Left ventricle myocardium inferior (tissue), 1 donor: ENCODE measurements at regions of chr7 and their contacts with region 1.

Region 1: DNA sequence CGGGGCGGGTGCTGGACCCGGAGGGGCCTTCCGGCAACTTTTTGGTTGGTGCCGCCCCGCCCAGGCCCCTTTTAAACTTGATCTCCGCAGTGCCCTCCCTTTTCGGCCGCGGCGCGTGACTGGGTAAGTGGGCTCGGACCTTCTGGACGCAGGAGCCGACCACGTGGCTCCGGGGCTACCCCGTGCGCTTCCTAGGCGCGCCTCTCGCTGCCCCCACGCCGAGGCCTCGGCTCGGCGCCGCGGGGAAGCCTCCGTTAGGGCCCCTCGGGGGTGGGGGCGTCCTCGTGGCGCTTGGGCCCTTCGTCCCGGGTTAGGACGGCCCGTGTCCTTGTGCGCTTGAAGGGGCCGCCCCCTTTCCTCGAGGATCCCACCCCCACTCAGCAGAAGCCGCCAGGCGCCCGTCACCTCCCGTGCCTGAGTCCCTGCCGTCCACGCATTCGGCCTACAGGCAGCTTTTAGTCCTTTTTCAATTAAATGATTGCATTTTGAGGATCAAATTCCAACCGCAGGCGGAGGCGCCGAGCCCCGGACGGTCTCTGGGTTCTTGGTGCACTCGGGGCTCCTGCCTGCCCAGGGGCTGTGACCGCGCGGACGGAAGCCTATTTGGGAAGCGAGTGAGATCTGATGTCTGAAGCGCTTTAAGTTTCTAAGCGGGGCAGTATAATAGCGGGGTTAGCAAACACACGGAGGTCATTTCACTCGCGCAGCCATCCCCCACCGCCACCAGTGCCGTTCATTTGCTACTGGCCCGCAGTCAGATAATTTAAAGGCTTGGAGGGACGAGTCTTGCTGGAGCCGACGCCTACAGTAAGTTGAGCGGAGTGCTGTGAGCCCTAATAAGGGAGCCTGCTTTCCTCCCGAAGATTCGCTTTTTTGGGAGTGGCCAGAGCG is 31.8 kb upstream of the TOMM7 start:
- DNase-seq: peak; percentile 92
- H3K4me3 ChIP-seq: peak overlapping the region; percentile 95
- H3K27ac ChIP-seq: peak overlapping the region; percentile 97
- H3K4me1 ChIP-seq: peaks cover 52% of the 10 kb centered on the region
- H3K27me3 ChIP-seq: no peaks in the 10 kb centered on the region
- CTCF ChIP-seq: peak; percentile 95

Region 2: DNA sequence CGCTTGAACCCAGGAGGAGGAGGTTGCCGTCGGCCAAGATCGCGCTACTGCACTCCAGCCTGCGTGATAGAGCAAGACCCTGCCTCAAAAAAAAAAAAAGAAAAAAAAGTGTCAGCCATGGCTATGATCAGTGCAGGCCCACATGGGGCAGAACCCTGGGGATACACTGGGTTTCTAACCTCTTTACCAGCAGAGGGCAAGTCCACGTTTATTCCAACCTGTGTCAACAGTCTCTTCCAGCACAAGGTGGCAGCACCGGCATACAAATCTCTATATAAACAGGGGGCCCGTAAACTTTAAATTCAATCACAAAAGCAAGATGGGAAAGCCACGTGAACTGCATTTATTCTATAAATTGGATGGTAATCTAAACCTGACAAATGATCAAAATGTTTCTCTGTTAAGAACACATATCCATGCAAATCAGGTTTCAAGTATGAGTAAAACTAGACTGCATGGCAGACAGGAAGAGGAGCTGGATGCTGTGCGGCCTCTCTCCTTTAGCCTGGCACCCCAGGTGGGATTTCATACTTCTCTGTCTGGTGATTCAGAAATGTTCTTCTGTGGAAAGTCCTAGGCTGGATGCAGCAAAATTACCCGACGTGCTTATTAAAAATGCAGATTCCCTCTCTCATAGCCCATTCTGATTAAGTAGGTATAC is 294.4 kb before region 1 on chr7:
- intact Hi-C with region 1: loop called (anchors 5 kb)
- DNase-seq: peak; percentile 60
- H3K4me3 ChIP-seq: no peak overlapping the region
- H3K27ac ChIP-seq: peak overlapping the region; percentile 82
- H3K4me1 ChIP-seq: peaks cover 48% of the 10 kb centered on the region
- H3K27me3 ChIP-seq: no peaks in the 10 kb centered on the region
- CTCF ChIP-seq: peak; percentile 95

Region 3: DNA sequence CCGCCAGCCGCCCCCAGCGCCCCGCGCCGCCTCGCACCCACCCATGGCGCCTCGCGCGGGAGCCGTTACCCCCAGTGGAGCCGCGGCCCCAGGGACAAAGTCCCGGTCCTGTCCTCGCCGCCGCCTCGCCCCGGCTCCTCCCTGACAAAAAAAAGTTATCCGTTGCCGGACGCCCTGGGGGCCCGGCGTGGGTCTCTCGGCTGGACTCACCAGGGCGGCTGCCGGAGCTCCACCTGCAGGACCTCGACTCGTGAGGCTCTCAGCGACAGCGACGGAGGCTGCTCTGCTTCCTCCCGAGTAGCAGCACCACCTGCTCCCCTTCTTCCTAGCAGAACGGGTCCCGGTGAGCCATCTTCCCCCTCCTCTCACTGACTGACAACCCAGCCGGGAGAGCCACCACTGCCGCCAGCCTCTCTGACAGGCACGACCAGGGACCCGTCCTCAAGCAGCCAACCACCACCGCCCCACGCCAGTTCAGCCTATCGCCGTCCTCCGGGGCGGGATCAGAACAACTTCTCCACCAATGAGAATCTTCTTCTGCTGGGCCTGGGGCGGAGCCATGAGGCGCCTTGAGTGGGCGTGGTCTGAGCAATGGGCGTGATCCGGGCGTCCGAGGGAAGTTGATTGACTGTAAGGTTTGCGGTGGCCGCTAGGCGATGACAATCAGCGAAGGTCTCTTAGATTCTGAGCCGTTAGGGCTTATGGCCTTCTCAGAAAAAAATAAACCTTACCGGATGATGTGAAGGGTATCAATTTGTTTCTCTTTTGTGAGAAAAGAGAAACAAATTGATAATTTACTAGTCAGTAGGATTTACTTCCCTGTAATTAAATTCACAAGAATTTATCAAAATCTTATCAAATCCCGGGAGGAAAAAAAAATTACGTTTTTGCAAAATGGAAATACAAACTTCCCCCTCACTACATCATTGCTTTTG is 159.6 kb after region 1 on chr7 and contains the start of gene HYCC1:
- intact Hi-C with region 1: loop called (anchors 10 kb)
- DNase-seq: peak; percentile 99
- H3K4me3 ChIP-seq: peak within 1 kb of the TSS; percentile 91
- H3K27ac ChIP-seq: peak within 1 kb of the TSS; percentile 91
- H3K4me1 ChIP-seq: peaks cover 56% of the 10 kb centered on the region
- H3K27me3 ChIP-seq: no peaks in the 10 kb centered on the region
- CTCF ChIP-seq: peak; percentile 75
- total RNA-seq, gene HYCC1: 34.8 TPM

Region 4: DNA sequence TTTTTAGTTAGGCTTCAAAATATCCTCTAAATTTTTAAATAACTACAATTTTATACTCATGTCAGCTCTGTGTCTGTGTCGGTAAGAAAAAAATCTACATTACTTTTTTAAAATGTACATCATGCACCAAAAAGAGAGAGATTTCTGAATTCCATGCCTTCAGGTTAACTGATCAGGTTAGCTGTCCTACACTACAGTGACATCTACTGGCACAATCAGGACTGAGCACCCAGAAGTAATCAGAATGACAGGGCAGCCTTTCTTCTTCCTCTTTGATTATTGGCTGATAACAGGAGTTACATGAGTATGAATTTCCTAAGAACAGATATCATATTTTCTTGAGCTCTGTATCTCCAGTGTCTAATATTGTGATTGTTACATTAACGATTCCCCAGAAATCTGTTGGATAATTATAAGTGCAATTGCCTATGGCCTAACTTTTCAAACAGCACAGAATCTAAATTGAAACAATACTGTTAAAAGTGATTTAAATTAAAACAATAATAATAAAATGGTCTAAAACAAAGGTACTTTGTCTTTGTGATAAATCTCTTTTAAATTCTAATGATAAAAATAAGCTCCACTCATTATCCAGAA is 201.3 kb after region 1 on chr7:
- intact Hi-C with region 1: loop called (anchors 10 kb)
- DNase-seq: no peak
- H3K4me3 ChIP-seq: no peak overlapping the region
- H3K27ac ChIP-seq: no peak overlapping the region
- H3K4me1 ChIP-seq: peaks cover 7% of the 10 kb centered on the region
- H3K27me3 ChIP-seq: no peaks in the 10 kb centered on the region
- CTCF ChIP-seq: peak; percentile 99

Region 5: DNA sequence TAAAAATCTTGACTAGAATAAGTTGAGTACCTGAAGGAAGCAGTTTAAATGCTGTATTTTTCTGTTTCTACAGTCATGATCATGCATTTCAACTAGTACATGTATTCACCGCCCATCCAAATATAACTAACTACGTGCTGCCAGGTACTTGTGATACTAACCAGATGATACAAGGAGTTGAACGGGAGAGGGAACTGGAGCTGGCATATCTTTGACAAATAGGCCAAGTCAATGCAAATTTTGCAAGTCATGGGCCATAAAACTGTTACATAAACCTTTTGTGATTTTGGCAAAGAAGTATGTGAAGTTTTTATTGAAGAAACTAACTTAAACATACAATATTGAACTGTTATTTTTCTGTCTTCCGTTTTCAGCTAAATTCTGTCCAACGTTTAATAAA is 341.9 kb after region 1 on chr7:
- intact Hi-C with region 1: no loop called
- DNase-seq: no peak
- H3K4me3 ChIP-seq: peak overlapping the region; percentile 22
- H3K27ac ChIP-seq: peak overlapping the region; percentile 73
- H3K4me1 ChIP-seq: peaks cover 12% of the 10 kb centered on the region
- H3K27me3 ChIP-seq: no peaks in the 10 kb centered on the region
- CTCF ChIP-seq: no peak